Heart right ventricle (tissue), 16 donors: ENCODE measurements at regions of chr12 and their contacts with region 1.

Region 1: GRCh38 chr12:11758510-11759493 is 109.3 kb downstream of the ETV6 start:
- DNase-seq: peak in 1 of 2 donors; percentile 67
- ATAC-seq: peak; percentile 63 to 83 (median 79)
- H3K4me3 ChIP-seq: peak overlapping the region in 2 of 10 donors; percentile 2 to 5
- H3K27ac ChIP-seq: peak overlapping the region; percentile 72 to 92 (median 88)
- H3K4me1 ChIP-seq: peaks cover 13 to 91% (median 86%) of the 10 kb centered on the region in 9 donors
- H3K27me3 ChIP-seq: no peaks in the 10 kb centered on the region
- CTCF ChIP-seq: no peak

Region 2: DNA sequence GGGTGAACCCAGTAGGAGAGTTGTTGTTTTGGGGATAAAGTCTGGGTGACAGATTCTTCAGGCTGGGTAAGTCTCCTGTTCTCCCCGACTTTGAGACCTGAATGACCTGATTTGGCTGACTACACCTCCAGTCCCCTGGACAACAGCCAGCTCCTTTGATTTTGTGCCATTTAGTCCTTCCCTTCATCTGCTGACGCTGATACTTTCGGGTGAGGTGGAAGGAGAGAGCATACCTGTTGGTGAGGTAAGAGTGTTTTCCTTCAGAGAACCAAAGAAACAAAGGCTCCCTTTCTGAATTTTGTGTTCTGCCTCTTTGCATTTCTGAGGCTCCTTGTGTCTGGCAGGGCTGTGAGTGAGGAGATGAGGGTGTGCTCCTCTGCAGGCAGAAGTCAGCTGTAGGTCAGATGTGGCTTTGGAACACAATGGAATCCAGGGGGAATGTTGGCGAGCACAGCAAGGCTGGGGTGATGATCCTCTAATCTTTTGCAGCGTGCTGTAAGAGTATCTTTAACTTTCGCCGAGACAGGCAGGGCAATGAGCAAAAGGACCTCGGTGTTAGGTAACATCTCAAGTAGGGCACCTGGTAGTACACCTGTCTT is 97.2 kb before region 1 on chr12:
- intact Hi-C with region 1: loop called in 4 of 10 experiments (anchors 10 kb)
- DNase-seq: no peak
- ATAC-seq: peak in 3 of 8 donors; percentile 26 to 46 (median 41)
- H3K4me3 ChIP-seq: no peak overlapping the region
- H3K27ac ChIP-seq: peak overlapping the region in 8 of 10 donors; percentile 15 to 88 (median 77)
- H3K4me1 ChIP-seq: peaks cover 2 to 98% (median 81%) of the 10 kb centered on the region in 9 donors
- H3K27me3 ChIP-seq: no peaks in the 10 kb centered on the region
- CTCF ChIP-seq: no peak

Region 3: DNA sequence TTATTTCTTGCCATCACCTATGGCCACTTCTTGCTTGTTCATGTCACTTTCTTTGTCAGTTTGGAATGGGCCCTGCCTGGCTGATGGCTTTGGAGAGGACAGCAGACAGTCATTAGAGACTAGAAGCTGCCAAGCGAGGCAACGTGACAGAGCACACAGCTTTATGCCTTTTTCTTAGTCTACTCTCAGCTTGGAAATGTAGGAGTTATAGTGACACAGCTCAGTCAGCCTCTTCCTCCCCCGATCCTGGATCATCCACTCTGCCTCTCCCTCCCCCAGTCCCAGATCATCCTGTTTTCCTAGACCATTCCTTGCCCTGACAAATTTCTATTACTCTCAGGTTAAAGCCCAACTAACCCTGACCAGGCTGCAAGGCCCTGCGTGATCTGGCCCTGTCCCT is 82.8 kb before region 1 on chr12:
- intact Hi-C with region 1: no loop called
- DNase-seq: no peak
- ATAC-seq: peak in 1 of 8 donors; percentile 13
- H3K4me3 ChIP-seq: no peak overlapping the region
- H3K27ac ChIP-seq: peak overlapping the region in 6 of 10 donors; percentile 12 to 61 (median 29)
- H3K4me1 ChIP-seq: peaks cover 33 to 97% (median 86%) of the 10 kb centered on the region in 9 donors
- H3K27me3 ChIP-seq: no peaks in the 10 kb centered on the region
- CTCF ChIP-seq: no peak

Region 4: GRCh38 chr12:11695321-11695720 is 63.5 kb before region 1 on chr12:
- intact Hi-C with region 1: no loop called
- DNase-seq: no peak
- ATAC-seq: peak in 5 of 8 donors; percentile 14 to 68 (median 46)
- H3K4me3 ChIP-seq: no peak overlapping the region
- H3K27ac ChIP-seq: no peak overlapping the region
- H3K4me1 ChIP-seq: peaks cover 0 to 64% (median 20%) of the 10 kb centered on the region in 9 donors
- H3K27me3 ChIP-seq: no peaks in the 10 kb centered on the region
- CTCF ChIP-seq: no peak

Region 5: DNA sequence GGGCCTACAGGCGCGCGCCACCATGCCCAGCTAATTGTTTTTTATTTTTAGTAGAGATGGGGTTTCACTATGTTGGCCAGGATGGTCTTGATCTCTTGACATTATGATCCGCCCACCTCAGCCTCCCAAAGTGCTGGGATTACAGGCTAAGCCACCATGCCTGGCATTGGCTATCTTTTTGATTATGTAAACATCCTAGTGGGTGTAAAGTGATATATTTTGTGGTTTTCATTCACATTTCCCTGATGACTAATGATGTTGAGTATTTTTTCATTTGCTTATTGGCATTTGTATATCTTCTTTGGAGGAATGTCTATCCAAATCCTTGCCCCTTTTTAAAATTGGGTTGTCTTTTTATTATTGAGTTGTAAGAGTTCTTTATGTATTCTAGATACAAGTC is 869.2 kb after region 1 on chr12:
- intact Hi-C with region 1: no loop called
- DNase-seq: no peak
- ATAC-seq: no peak
- H3K4me3 ChIP-seq: no peak overlapping the region
- H3K27ac ChIP-seq: no peak overlapping the region
- H3K4me1 ChIP-seq: peaks cover 0 to 18% (median 3%) of the 10 kb centered on the region in 9 donors
- H3K27me3 ChIP-seq: no peaks in the 10 kb centered on the region
- CTCF ChIP-seq: no peak